A549 (cell line): ENCODE measurements at regions of chr14 and their contacts with region 1.

Region 1: DNA sequence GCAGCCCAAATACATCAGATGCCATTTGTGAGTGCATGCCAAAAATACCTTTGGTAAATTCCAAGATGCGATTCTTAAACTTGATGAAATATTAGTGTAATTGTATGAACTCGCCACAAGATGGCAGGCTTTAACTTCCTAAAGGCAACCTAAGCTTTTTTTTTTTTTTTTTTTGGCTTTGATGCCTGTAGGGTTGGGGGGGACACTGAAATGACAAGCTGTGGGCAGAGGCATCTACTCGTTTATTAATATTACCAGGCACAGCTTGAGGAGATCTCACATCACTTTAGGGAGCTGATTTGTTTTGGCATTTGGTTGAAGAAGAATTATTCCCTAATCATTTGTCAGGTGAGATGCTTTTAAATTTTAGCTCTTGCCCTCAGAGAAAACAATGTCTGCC is 126.7 kb upstream of the CCDC196 start:
- DNase-seq: peak; percentile 41 to 71
- ATAC-seq: peak in 1 of 2 experiments; percentile 33; a peak in 2 of 6 replicates
- H3K4me3 ChIP-seq: no peak overlapping the region
- H3K27ac ChIP-seq: no peak overlapping the region
- H3K4me1 ChIP-seq: no peaks in the 10 kb centered on the region
- CTCF ChIP-seq: peak; percentile 82
- EP300 ChIP-seq: no peak
- POLR2A ChIP-seq: no peak
- RAD21 ChIP-seq: peak; percentile 85

Region 2: DNA sequence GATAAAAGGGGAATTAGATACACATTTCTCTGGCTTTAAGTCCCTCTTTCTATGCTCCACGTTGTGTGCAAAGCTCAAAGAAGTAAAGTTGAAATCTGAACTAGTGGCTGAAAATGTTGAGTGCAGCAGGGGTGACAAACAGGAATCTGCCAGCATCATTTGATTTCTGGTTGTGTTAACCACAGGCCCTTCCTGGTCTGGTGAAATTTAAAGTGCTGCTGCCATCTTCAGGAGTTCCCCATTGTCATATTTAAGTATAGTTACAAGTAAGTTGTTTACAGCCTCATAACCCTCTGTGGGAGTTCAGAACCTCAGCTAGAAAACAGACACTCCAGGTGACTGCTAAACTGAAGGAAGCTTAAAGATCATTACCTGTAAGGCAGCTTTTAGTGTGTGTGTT is 35.8 kb after region 1 on chr14:
- CTCF ChIA-PET with region 1: interaction called, 19 read pairs
- POLR2A ChIA-PET with region 1: no interaction called
- DNase-seq: no peak
- ATAC-seq: no peak
- H3K4me3 ChIP-seq: no peak overlapping the region
- H3K27ac ChIP-seq: no peak overlapping the region
- H3K4me1 ChIP-seq: no peaks in the 10 kb centered on the region
- CTCF ChIP-seq: no peak
- EP300 ChIP-seq: no peak
- POLR2A ChIP-seq: no peak
- RAD21 ChIP-seq: no peak

Region 3: DNA sequence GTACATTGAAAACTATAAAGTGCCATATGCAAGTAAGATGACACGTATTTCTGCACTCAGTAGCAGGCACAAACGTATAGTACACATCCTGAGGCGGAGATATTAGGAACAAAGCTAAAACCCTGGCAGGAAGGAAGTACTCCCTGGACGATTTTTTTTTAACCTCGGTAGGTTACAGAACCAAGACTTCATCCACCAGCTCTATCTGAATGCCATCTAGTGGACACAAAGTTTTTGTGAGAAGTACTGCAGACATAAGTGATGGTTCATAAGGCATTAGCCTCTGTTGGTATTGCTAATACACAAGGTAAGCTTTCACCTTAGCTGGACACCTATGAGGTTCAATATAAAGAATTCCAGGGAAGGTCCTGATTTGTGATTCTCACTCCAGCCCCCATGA is 43.7 kb after region 1 on chr14:
- CTCF ChIA-PET with region 1: interaction called, 34 read pairs
- POLR2A ChIA-PET with region 1: interaction called, 4 read pairs
- DNase-seq: peak; percentile 13 to 59
- ATAC-seq: peak; percentile 86 to 90
- H3K4me3 ChIP-seq: no peak overlapping the region
- H3K27ac ChIP-seq: no peak overlapping the region
- H3K4me1 ChIP-seq: no peaks in the 10 kb centered on the region
- CTCF ChIP-seq: peak; percentile 55
- EP300 ChIP-seq: no peak
- POLR2A ChIP-seq: no peak
- RAD21 ChIP-seq: peak; percentile 32 to 41; a peak in 4 of 5 replicates